HepG2 (cell line): ENCODE measurements at regions of chr20 and their contacts with region 1.

Region 1: GRCh38 chr20:3786665-3787323 is at the start of gene CENPB:
- DNase-seq: peak; percentile 83
- ATAC-seq: peak; percentile 83
- H3K4me3 ChIP-seq: peak within 1 kb of the TSS; percentile 57 to 82 (median 82)
- H3K27ac ChIP-seq: peak within 1 kb of the TSS; percentile 34
- H3K4me1 ChIP-seq: peaks cover 79% of the 10 kb centered on the region
- H3K27me3 ChIP-seq: peaks cover 0 to 18% of the 10 kb centered on the region in 2 experiments; a peak in 3 of 5 replicates
- CTCF ChIP-seq: peak; percentile 83
- EP300 ChIP-seq: no peak
- POLR2A ChIP-seq: peak in 1 of 2 experiments; percentile 69; a peak in 1 of 4 replicates
- RAD21 ChIP-seq: peak; percentile 97
- total RNA-seq, gene CENPB: 42.9 and 54.5 TPM in 2 replicates

Region 2: DNA sequence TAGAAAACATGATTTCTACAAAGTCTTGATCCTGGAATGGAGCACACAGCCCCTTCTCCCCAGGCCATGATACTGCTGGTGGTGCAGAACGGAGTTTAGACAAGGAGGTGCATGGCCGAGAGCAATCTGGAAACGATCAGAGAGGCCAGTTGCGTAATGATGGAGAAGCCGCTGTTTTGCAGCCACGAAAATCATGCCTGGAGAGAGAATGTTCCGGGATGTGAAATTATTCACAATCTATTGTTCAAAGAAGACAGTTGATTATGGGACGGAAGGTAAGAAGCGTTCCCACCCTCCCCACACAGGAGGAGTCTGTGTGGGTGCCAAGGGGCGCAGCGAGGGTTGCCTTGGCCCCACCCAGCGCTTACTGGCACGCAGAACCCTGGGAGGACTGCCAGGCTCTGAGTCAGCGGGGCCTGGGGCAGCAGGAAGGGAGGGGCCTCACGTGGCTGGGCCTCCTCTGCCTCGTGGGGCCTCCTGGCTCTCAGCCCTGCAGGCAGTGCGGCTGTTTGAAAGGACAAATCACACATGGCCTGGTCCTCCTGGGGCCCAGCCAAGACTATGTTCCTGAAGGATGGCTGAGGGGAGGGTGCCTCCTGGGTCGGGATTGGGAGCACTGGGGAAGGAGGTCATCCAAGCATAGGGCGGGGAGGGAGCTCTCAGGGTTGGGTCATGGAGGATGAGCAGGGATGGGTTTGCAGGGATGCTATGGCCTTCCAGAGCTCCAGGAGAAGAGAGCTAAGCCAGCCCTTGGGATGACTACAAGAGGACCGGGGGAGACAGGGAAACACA is 24.9 kb after region 1 on chr20:
- CTCF ChIA-PET with region 1: interaction called, 119 read pairs
- POLR2A ChIA-PET with region 1: interaction called, 10 read pairs
- in situ Hi-C with region 1: loop called (anchors 5 kb)
- intact Hi-C with region 1: loop called (anchors 1 kb)
- DNase-seq: peak; percentile 90
- ATAC-seq: peak; percentile 81
- H3K4me3 ChIP-seq: peak overlapping the region; percentile 18 to 59 (median 44); a peak in 5 of 6 replicates
- H3K27ac ChIP-seq: no peak overlapping the region
- H3K4me1 ChIP-seq: peaks cover 61% of the 10 kb centered on the region
- H3K27me3 ChIP-seq: peaks cover 2 to 14% of the 10 kb centered on the region in 2 experiments; a peak in 3 of 5 replicates
- CTCF ChIP-seq: peak; percentile 36
- EP300 ChIP-seq: peak; percentile 60 to 70; a peak in 3 of 4 replicates
- POLR2A ChIP-seq: peak in 1 of 2 experiments; percentile 75; a peak in 2 of 4 replicates
- RAD21 ChIP-seq: peak; percentile 29; the same call in 1 of the 2 replicates

Region 3: GRCh38 chr20:3846740-3847428 is 60.1 kb after region 1 on chr20 and contains the start of gene MAVS:
- CTCF ChIA-PET with region 1: no interaction called
- POLR2A ChIA-PET with region 1: interaction called, 6 read pairs
- in situ Hi-C with region 1: loop called (anchors 5 kb)
- intact Hi-C with region 1: loop called (anchors 2 kb)
- DNase-seq: peak; percentile 90
- ATAC-seq: peak; percentile 96
- H3K4me3 ChIP-seq: peak within 1 kb of the TSS; percentile 78 to 97 (median 96)
- H3K27ac ChIP-seq: peak within 1 kb of the TSS; percentile 91
- H3K4me1 ChIP-seq: peaks cover 50% of the 10 kb centered on the region
- H3K27me3 ChIP-seq: no peaks in the 10 kb centered on the region; a peak in 1 of 5 replicates
- CTCF ChIP-seq: peak; percentile 68
- EP300 ChIP-seq: peak in 1 of 2 experiments; percentile 10; a peak in 1 of 4 replicates
- POLR2A ChIP-seq: peak; percentile 96 to 98
- RAD21 ChIP-seq: peak; percentile 63; the same call in 1 of the 2 replicates
- total RNA-seq, gene MAVS: 36.6 and 44.4 TPM in 2 replicates

Region 4: DNA sequence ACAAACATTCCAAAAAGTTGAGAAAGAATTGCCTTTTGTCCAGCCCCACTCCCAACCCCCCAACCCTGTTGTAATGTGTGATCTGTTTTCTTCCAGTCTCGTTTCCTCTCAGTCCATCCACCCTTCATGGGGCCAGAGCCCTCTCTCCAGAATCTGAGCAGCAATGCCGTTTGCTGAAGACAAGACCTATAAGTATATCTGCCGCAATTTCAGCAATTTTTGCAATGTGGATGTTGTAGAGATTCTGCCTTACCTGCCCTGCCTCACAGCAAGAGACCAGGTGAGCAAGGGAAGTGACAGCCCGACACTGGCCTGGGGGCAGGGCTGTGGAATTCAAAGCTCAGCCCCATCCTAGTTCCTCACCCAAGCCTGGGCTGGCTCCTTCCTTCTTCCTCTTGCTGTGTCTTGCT is 67.7 kb after region 1 on chr20:
- CTCF ChIA-PET with region 1: interaction called, 49 read pairs
- POLR2A ChIA-PET with region 1: interaction called, 12 read pairs
- in situ Hi-C with region 1: loop called (anchors 5 kb)
- intact Hi-C with region 1: loop called (anchors 1 kb)
- DNase-seq: peak; percentile 70
- ATAC-seq: peak; percentile 65
- H3K4me3 ChIP-seq: no peak overlapping the region
- H3K27ac ChIP-seq: peak overlapping the region; percentile 22
- H3K4me1 ChIP-seq: peaks cover 24% of the 10 kb centered on the region
- H3K27me3 ChIP-seq: no peaks in the 10 kb centered on the region
- CTCF ChIP-seq: no peak
- EP300 ChIP-seq: peak in 1 of 2 experiments; percentile 31; a peak in 1 of 4 replicates
- POLR2A ChIP-seq: no peak
- RAD21 ChIP-seq: no peak